ENCODE measurements at regions of chr18 and their contacts with region 1.

Region 1: DNA sequence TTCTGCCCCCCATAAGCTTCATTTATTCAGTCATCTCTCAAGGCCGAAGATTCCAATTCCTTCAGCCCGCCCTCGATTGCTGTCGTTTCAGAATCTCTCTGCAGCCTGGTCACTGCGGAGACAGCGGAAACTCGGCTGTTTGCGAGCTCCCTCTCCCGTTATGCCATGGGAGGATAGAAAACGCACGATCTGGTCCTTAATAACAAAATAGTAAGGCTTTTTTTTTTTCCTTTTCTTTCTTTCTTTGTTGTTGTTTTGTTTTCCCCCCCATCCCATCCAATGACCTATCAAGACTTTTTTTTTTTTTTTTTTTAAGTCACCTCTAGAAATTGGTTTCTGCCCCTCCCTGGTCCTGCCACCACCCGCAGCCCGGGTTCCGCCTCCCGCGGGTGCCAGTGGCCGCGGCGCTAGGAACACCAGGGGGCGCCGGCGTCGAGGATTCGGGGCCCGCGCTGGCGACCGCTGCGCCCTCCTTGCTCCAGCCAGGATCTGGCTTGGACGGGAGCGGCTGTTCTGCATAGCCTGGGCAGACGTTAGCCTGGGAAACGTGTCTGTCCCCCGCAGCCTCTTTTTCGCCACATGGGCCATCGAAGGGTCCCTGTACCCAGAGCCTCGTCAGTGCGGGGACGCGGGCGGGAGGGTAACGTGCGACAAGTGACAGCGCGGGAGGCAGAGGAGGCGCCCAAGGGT is 10.1 kb downstream of the CPLX4 start:
- DNase-seq: peak; percentile 82
- ATAC-seq: peak; percentile 95
- H3K4me3 Mint-ChIP-seq: peak overlapping the region; percentile 20
- H3K27ac Mint-ChIP-seq: no peak overlapping the region
- H3K4me1 Mint-ChIP-seq: no peaks in the 10 kb centered on the region
- H3K27me3 Mint-ChIP-seq: peaks cover 42% of the 10 kb centered on the region

Region 2: DNA sequence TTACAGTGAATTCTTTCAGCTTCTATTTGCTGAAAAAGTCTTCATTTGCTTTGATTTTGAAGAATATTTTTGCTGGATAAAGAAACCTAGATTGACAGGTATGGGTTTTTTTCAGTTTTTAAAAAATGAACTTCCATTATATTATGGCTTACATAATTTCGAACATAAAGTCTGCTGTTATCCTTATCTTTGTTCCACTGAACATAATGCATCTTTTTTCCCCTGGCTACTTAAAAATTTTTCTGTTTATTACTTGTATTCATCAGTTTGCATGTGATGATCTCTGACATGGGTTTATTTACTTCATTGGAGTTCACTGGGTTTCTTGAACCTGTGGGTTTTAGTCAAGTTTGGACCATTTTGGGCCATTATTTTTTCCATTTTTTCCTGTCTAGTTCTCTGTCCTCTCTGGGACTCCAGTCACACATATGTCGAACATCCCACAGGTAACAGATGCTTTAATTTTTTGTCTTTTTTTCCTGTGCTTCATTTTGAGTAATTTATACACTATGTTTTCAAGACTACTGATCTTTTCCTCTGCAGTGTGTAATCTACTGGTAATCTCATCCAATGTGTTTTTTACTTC is 135.6 kb before region 1 on chr18:
- CTCF ChIA-PET with region 1: no interaction called
- POLR2A ChIA-PET with region 1: no interaction called
- intact Hi-C with region 1: no loop called
- DNase-seq: no peak
- ATAC-seq: no peak
- H3K4me3 Mint-ChIP-seq: no peak overlapping the region
- H3K27ac Mint-ChIP-seq: no peak overlapping the region
- H3K4me1 Mint-ChIP-seq: no peaks in the 10 kb centered on the region
- H3K27me3 Mint-ChIP-seq: peaks cover 15% of the 10 kb centered on the region

Region 3: GRCh38 chr18:59249205-59249774 is 59.1 kb before region 1 on chr18:
- CTCF ChIA-PET with region 1: interaction called, 14 read pairs
- POLR2A ChIA-PET with region 1: no interaction called
- intact Hi-C with region 1: loop called (anchors 1 to 2 kb)
- DNase-seq: peak; percentile 63
- ATAC-seq: no peak
- H3K4me3 Mint-ChIP-seq: no peak overlapping the region
- H3K27ac Mint-ChIP-seq: no peak overlapping the region
- H3K4me1 Mint-ChIP-seq: no peaks in the 10 kb centered on the region
- H3K27me3 Mint-ChIP-seq: peaks cover 43% of the 10 kb centered on the region

Region 4: DNA sequence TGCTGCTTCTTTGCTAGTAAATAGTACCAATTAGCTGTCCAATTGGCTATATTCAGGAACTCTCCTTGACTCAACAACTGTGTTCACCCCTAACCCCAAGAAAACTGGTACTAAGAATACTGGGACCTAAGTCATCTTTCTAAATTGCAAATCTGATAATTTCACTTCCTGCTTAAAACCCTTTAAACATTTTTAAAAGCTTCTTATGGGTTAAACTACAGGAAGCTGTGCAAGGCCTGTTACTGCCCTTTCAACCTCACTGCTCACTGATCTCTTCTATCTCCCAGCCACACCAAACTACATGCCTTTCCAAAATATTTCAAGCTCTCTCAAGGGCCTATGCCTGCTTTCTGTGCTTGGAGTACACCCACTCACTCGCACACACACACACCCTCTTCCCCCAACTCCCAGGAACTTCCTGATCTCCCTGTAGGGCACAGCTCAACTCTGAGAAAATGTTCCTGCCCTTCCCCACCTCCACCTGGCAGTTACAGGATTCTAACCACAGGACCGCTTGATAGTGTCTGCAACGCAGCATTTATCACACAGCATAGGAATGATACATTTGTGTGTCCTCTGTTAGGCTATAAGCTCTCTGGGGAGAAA is 44.0 kb after region 1 on chr18:
- CTCF ChIA-PET with region 1: interaction called, 12 read pairs
- POLR2A ChIA-PET with region 1: no interaction called
- intact Hi-C with region 1: no loop called
- DNase-seq: no peak
- ATAC-seq: no peak
- H3K4me3 Mint-ChIP-seq: no peak overlapping the region
- H3K27ac Mint-ChIP-seq: peak overlapping the region; percentile 59
- H3K4me1 Mint-ChIP-seq: peaks cover 29% of the 10 kb centered on the region
- H3K27me3 Mint-ChIP-seq: no peaks in the 10 kb centered on the region

Region 5: GRCh38 chr18:59358712-59359575 is 50.6 kb after region 1 on chr18 and contains the start of gene LMAN1:
- CTCF ChIA-PET with region 1: interaction called, 12 read pairs
- POLR2A ChIA-PET with region 1: no interaction called
- intact Hi-C with region 1: loop called in 1 of 2 experiments (anchors 1 kb)
- DNase-seq: peak; percentile 97
- ATAC-seq: peak; percentile 93
- H3K4me3 Mint-ChIP-seq: peak within 1 kb of the TSS; percentile 98
- H3K27ac Mint-ChIP-seq: peak within 1 kb of the TSS; percentile 99
- H3K4me1 Mint-ChIP-seq: peaks cover 29% of the 10 kb centered on the region
- H3K27me3 Mint-ChIP-seq: no peaks in the 10 kb centered on the region
- total RNA-seq, gene LMAN1: 121 to 134 TPM

Region 6: GRCh38 chr18:59593291-59593717 is 284.9 kb after region 1 on chr18:
- CTCF ChIA-PET with region 1: no interaction called
- POLR2A ChIA-PET with region 1: no interaction called
- intact Hi-C with region 1: no loop called
- DNase-seq: no peak
- ATAC-seq: no peak
- H3K4me3 Mint-ChIP-seq: no peak overlapping the region
- H3K27ac Mint-ChIP-seq: no peak overlapping the region
- H3K4me1 Mint-ChIP-seq: no peaks in the 10 kb centered on the region
- H3K27me3 Mint-ChIP-seq: peaks cover 6% of the 10 kb centered on the region

Measured in activated CD4-positive, alpha-beta T cell treated with anti-CD3 and anti-CD28 coated beads for 36 hours (primary cell).